H1 (cell line): ENCODE measurements at regions of chr20 and their contacts with region 1.

Region 1: DNA sequence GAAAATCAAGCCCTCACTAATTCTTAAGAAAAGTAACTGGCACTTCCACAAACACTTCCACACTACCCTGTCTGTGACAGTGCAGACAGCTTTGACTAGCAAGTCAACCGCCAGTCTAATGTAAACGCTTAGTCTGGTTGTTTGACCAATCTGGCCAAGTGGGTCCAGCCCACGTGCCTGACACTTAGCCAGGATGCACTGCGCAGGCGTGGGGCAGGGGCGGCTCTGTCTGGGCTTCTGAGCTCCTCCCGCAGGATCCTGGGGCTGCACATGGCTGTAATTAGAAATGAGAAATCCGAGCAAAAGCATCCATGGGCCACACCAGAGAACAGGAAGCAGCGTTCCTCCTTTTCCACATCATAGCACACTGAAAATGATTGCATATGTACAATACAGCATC is 424.1 kb downstream of the FOXA2 start:
- DNase-seq: no peak
- H3K4me3 ChIP-seq: no peak overlapping the region
- H3K27ac ChIP-seq: no peak overlapping the region
- H3K4me1 ChIP-seq: no peaks in the 10 kb centered on the region
- H3K27me3 ChIP-seq: no peaks in the 10 kb centered on the region
- CTCF ChIP-seq: no peak
- EP300 ChIP-seq: no peak
- POLR2A ChIP-seq: no peak
- RAD21 ChIP-seq: no peak

Region 2: GRCh38 chr20:21995461-21995860 is 164.8 kb before region 1 on chr20:
- CTCF ChIA-PET with region 1: no interaction called
- POLR2A ChIA-PET with region 1: no interaction called
- DNase-seq: no peak
- H3K4me3 ChIP-seq: no peak overlapping the region
- H3K27ac ChIP-seq: no peak overlapping the region; the same call in 1 of the 2 replicates
- H3K4me1 ChIP-seq: no peaks in the 10 kb centered on the region
- H3K27me3 ChIP-seq: no peaks in the 10 kb centered on the region
- CTCF ChIP-seq: no peak
- EP300 ChIP-seq: no peak
- POLR2A ChIP-seq: no peak
- RAD21 ChIP-seq: no peak

Region 3: GRCh38 chr20:22180244-22180643 is 20.0 kb after region 1 on chr20:
- CTCF ChIA-PET with region 1: interaction called, 23 read pairs
- POLR2A ChIA-PET with region 1: no interaction called
- DNase-seq: peak in 1 of 2 experiments; percentile 80
- H3K4me3 ChIP-seq: no peak overlapping the region
- H3K27ac ChIP-seq: no peak overlapping the region
- H3K4me1 ChIP-seq: no peaks in the 10 kb centered on the region
- H3K27me3 ChIP-seq: no peaks in the 10 kb centered on the region
- CTCF ChIP-seq: peak; percentile 37 to 75 (median 57)
- EP300 ChIP-seq: no peak
- POLR2A ChIP-seq: no peak
- RAD21 ChIP-seq: peak; percentile 33 to 44

Region 4: GRCh38 chr20:22217712-22218352 is 57.6 kb after region 1 on chr20:
- CTCF ChIA-PET with region 1: no interaction called
- POLR2A ChIA-PET with region 1: no interaction called
- DNase-seq: no peak
- H3K4me3 ChIP-seq: no peak overlapping the region
- H3K27ac ChIP-seq: no peak overlapping the region
- H3K4me1 ChIP-seq: peaks cover 0 to 8% (median 5%) of the 10 kb centered on the region in 4 experiments; a peak in 6 of 7 replicates
- H3K27me3 ChIP-seq: no peaks in the 10 kb centered on the region
- CTCF ChIP-seq: no peak
- EP300 ChIP-seq: no peak
- POLR2A ChIP-seq: no peak
- RAD21 ChIP-seq: no peak

Region 5: GRCh38 chr20:22462975-22463914 is 303.0 kb after region 1 on chr20:
- CTCF ChIA-PET with region 1: no interaction called
- POLR2A ChIA-PET with region 1: no interaction called
- DNase-seq: no peak
- H3K4me3 ChIP-seq: no peak overlapping the region
- H3K27ac ChIP-seq: no peak overlapping the region
- H3K4me1 ChIP-seq: peaks cover 3 to 8% (median 4%) of the 10 kb centered on the region in 4 experiments
- H3K27me3 ChIP-seq: peaks cover 6 to 34% (median 19%) of the 10 kb centered on the region in 4 experiments
- CTCF ChIP-seq: no peak
- EP300 ChIP-seq: no peak
- POLR2A ChIP-seq: no peak
- RAD21 ChIP-seq: no peak